ENCODE measurements at regions of chr1 and their contacts with region 1.

Region 1: DNA sequence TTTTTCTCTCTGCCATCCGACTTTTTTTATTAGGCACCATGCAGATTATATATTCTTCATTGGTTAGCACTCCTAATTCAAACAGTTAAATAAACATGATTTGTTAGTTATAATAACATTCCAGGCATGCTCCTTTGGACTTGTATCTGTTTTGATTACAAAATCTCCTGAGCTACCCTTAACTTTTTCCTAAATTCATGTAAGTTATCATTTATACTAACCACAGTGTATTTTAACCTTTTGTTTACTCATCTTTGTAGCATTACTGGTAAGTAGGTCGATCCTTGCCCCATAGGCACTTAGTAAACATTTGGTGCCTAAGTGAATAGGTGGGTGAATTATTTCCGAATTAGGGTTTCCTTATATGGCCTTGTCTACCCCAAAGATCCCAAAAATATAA is 43.8 kb downstream of the MIER1 start:
- DNase-seq: no peak
- H3K4me3 Mint-ChIP-seq: no peak overlapping the region
- H3K27ac Mint-ChIP-seq: no peak overlapping the region
- H3K4me1 Mint-ChIP-seq: peaks cover 17% of the 10 kb centered on the region
- H3K27me3 Mint-ChIP-seq: no peaks in the 10 kb centered on the region

Region 2: GRCh38 chr1:66954208-66954607 is 14.4 kb before region 1 on chr1:
- CTCF ChIA-PET with region 1: no interaction called
- intact Hi-C with region 1: loop called (anchors 2 kb)
- DNase-seq: no peak
- H3K4me3 Mint-ChIP-seq: no peak overlapping the region
- H3K27ac Mint-ChIP-seq: peak overlapping the region; percentile 78
- H3K4me1 Mint-ChIP-seq: peaks cover 43% of the 10 kb centered on the region
- H3K27me3 Mint-ChIP-seq: no peaks in the 10 kb centered on the region

Region 3: GRCh38 chr1:66984491-66984890 is 15.9 kb after region 1 on chr1:
- CTCF ChIA-PET with region 1: no interaction called
- intact Hi-C with region 1: no loop called
- DNase-seq: no peak
- H3K4me3 Mint-ChIP-seq: no peak overlapping the region
- H3K27ac Mint-ChIP-seq: peak overlapping the region; percentile 82
- H3K4me1 Mint-ChIP-seq: peaks cover 54% of the 10 kb centered on the region
- H3K27me3 Mint-ChIP-seq: no peaks in the 10 kb centered on the region

Region 4: GRCh38 chr1:67561704-67562113 is 593.1 kb after region 1 on chr1:
- CTCF ChIA-PET with region 1: no interaction called
- intact Hi-C with region 1: no loop called
- DNase-seq: peak; percentile 96
- H3K4me3 Mint-ChIP-seq: no peak overlapping the region
- H3K27ac Mint-ChIP-seq: no peak overlapping the region
- H3K4me1 Mint-ChIP-seq: no peaks in the 10 kb centered on the region
- H3K27me3 Mint-ChIP-seq: no peaks in the 10 kb centered on the region